Left ventricle myocardium inferior (tissue), 1 donor: ENCODE measurements at regions of chr6 and their contacts with region 1.

Region 1: DNA sequence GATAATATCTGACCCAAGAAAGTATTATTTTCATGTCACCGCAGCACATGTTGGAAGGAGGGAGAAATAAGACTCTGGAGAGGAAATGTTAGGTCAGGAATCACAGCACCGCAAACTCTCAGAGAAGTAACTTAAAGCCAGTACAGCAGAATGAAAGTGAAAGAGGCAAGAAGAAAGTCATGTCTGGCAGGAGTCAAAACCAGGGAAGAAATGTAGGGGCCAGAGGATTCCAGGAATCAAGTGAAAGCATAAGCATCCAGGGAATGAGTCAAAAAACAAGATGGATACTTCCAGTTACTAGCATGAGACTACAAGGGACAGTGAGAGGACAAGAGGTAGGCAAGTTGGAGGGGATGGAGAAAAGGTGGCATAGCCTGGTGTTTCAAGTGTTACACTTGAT is 80.4 kb downstream of the AK9 start:
- DNase-seq: no peak
- H3K4me3 ChIP-seq: no peak overlapping the region
- H3K27ac ChIP-seq: no peak overlapping the region
- H3K4me1 ChIP-seq: no peaks in the 10 kb centered on the region
- H3K27me3 ChIP-seq: no peaks in the 10 kb centered on the region
- CTCF ChIP-seq: no peak

Region 2: DNA sequence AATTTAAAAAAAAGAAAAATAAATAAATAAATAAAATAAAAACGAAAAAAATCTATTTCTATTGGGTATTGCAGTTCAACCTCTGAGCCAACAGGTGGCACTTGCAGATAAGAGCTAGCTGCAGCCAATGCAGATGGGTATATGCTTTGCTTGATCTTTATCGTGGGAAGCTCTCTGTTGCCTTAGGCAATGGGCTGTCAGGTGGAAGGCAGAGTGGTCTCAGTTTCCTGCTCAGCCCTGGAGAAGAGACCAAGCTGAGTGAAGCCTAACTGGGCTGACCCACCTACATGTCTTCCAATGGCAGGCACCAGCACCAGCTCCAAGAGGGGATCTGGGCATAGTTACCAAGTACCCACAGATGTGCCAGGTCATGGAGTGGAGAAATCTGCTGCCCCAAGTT is 14.6 kb before region 1 on chr6:
- intact Hi-C with region 1: loop called (anchors 2 kb)
- DNase-seq: no peak
- H3K4me3 ChIP-seq: no peak overlapping the region
- H3K27ac ChIP-seq: no peak overlapping the region
- H3K4me1 ChIP-seq: no peaks in the 10 kb centered on the region
- H3K27me3 ChIP-seq: no peaks in the 10 kb centered on the region
- CTCF ChIP-seq: no peak

Region 3: GRCh38 chr6:109644131-109644530 is 33.5 kb after region 1 on chr6:
- intact Hi-C with region 1: no loop called
- DNase-seq: no peak
- H3K4me3 ChIP-seq: no peak overlapping the region
- H3K27ac ChIP-seq: no peak overlapping the region
- H3K4me1 ChIP-seq: no peaks in the 10 kb centered on the region
- H3K27me3 ChIP-seq: no peaks in the 10 kb centered on the region
- CTCF ChIP-seq: no peak